ENCODE measurements at regions of chr9 and their contacts with region 1.

Region 1: DNA sequence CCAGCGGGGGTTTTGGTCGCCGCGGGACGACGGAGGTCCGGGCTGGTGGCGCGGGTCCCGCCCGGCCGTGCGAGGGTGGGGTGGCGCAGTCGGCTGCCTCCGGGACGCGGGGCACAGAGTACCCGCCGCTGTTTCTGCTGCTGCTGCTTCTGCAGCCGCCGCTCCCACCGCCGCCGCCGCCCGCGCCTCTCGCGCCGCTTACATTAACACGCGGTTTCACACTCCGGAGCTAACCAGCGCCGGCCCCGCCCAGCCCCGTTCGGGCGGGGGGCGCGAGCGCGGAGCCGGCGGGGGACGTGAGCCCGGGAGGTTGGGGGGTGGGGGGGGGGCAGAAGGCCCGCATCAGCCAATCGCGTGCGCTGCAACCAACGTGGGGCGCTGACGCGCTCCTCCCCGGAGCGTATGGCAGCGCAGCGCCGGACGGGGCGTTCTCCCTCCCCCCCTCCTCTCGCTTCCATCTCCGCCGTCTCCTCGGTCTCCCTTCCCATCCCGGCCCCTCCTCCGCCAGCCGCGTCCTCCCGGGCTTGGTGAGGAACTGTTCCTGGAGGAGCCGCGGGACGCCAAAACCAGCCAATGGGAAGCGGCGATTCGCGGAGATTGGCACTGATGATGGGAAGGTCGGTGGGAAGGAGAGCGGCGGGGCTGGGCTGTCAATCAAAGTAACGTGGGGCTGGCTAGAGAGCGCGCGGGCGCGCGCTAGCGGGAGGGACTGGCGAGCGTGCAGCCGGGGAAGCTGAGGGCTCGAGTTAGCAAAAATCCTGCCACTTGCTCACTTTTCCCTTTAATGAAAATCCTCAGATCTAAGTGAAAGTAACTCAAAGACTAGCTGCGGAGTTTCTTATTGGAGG is at the start of gene TLE1:
- DNase-seq: peak; percentile 100
- H3K4me3 ChIP-seq: peak within 1 kb of the TSS; percentile 64 to 66
- H3K27ac ChIP-seq: peak within 1 kb of the TSS; percentile 79 to 85
- H3K4me1 ChIP-seq: no peaks in the 10 kb centered on the region
- H3K27me3 ChIP-seq: no peaks in the 10 kb centered on the region
- CTCF ChIP-seq: peak in 1 of 4 experiments; percentile 15
- POLR2A ChIP-seq: peak; percentile 74
- total RNA-seq, gene TLE1: 61.0 to 89.5 TPM

Region 2: GRCh38 chr9:80605129-80605528 is 1084.4 kb before region 1 on chr9:
- intact Hi-C with region 1: loop called (anchors 2 kb)
- DNase-seq: no peak
- H3K4me3 ChIP-seq: no peak overlapping the region
- H3K27ac ChIP-seq: no peak overlapping the region
- H3K4me1 ChIP-seq: no peaks in the 10 kb centered on the region
- H3K27me3 ChIP-seq: no peaks in the 10 kb centered on the region
- CTCF ChIP-seq: peak in 3 of 4 experiments; percentile 25 to 34 (median 31)
- POLR2A ChIP-seq: no peak

Region 3: DNA sequence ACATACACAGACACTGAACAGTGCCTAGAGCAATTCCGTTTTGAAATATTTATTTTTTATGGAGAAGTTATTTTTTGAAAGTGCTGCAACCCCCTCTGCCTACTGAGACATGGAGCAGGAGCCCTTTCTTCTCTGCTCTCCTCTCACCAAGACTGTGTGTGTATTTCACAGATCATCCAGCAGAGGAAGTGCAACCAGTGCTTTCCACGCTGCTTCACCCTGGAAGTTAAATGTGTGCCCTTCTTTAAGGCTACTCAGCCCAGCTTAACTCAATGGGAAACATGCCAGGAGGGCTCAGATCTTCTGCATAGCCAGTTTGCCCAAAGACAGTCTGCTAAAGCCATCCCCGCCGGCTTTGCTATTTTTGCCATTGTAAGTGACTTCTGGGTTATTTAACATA is 606.5 kb before region 1 on chr9:
- intact Hi-C with region 1: loop called (anchors 10 kb)
- DNase-seq: no peak
- H3K4me3 ChIP-seq: no peak overlapping the region
- H3K27ac ChIP-seq: no peak overlapping the region
- H3K4me1 ChIP-seq: no peaks in the 10 kb centered on the region
- H3K27me3 ChIP-seq: no peaks in the 10 kb centered on the region
- CTCF ChIP-seq: no peak
- POLR2A ChIP-seq: no peak

Region 4: DNA sequence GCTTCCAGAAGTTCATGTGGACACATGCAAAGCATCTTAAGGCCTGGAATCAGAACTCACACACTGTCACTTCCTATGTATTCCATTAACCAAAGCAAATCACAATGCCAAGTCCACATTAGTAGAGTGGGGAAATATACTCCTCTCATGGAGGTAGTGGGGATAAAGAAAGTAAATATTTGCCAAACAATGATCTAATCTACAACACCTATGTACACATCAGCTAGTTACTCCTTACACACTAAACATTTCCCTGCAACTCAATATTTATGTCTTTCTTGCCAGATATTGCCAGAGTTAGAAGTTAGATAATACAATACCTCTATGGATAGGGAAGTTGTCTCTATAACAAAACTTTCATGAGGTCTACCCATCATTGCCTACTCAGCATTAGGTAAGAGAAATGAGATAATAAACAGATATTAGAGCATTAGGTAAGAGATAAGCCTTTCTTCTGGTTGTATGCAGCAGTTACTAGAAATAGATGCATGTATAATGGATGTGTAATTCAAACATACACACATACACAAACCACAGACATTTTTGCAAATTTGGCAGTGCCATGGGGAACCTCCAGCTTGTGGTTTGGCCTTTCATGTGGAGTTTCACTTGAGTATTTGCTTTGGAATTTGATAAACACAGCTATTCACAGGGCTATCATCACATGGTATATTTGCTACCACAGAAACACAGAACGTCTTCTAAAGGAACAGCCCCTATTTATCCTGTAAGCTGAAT is 196.7 kb before region 1 on chr9:
- intact Hi-C with region 1: loop called (anchors 10 kb)
- DNase-seq: no peak
- H3K4me3 ChIP-seq: no peak overlapping the region
- H3K27ac ChIP-seq: no peak overlapping the region
- H3K4me1 ChIP-seq: no peaks in the 10 kb centered on the region
- H3K27me3 ChIP-seq: no peaks in the 10 kb centered on the region
- CTCF ChIP-seq: no peak
- POLR2A ChIP-seq: no peak

Region 5: DNA sequence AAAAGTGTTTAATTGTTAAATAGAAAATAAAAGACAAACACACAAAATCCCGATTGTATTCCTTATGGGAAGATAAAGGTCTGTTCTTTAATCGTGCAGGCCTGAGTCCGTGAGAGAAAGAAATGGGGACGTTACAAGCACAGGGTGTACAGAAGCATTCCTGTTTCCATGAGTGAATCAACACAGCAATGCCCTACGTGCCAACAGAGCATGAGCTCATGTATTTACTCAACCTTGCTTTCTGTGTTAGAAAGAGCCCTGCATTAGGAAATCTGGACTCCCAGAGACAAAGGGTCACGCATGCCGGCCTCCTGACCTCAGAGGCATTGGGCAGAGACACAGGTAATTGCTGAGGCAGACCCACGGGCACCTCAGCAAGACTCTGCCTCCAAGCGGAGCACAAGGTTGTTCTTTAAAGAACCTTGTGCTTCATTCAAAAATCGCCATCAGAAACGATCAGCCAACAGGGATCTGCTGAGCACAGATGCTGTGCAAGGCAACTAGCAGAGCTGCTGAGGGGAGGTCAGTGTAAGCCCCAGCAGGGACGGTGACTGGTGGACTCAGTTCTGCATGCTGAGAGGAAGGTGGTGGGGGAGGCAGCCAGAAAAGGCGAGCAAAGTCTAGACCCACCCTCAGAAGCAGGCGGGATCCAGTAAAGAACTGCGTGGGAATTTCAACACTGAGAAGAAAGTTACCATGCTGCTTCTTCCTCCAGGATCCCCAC is 101.3 kb before region 1 on chr9:
- intact Hi-C with region 1: loop called (anchors 5 kb)
- DNase-seq: peak; percentile 84
- H3K4me3 ChIP-seq: no peak overlapping the region
- H3K27ac ChIP-seq: peak overlapping the region; percentile 46 to 64
- H3K4me1 ChIP-seq: no peaks in the 10 kb centered on the region
- H3K27me3 ChIP-seq: no peaks in the 10 kb centered on the region
- CTCF ChIP-seq: peak in 1 of 4 experiments; percentile 1
- POLR2A ChIP-seq: no peak

Region 6: DNA sequence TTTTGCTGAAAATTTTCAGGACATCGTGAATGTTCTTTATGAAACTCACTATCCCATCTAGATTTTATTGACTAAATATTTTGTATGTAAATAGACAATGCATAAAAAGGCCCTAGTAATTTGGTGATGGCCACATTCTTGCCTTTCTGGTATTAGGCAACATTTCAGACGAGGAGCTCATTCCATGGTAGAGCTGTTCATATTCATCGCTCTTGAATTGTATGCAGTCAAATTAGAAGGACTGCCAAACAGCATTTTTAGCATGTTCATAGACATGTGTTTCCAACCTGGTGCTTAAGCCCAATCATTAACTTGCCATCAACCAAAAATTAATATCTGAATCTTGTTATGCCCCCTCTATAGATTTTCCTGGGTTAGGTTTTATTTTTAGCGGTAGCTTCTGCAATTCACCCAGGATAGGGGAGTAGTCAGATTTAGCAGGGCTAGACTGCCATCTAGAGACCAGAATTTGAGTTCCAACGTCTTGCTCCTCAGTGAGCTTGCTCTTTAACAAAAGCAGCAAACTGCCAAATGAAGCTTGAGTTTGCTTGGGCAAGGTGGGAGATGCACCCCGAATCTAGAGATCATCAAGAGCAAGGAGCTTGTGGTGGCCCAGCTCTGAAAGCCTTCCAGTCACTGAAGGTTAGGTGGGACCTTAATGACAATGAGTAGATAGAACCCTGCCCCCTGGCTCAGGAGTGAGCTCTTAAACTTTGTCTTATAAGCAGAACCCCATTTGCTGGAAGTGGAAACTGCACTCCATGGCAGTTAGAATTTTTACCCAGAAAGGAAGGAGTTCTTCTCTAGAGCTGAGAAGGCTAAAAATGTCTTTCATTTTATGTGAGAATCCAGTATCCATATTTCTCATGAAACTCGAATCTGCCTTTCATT is 917.2 kb after region 1 on chr9:
- intact Hi-C with region 1: loop called (anchors 10 kb)
- DNase-seq: peak; percentile 32
- H3K4me3 ChIP-seq: no peak overlapping the region
- H3K27ac ChIP-seq: no peak overlapping the region
- H3K4me1 ChIP-seq: peaks cover 5% of the 10 kb centered on the region
- H3K27me3 ChIP-seq: no peaks in the 10 kb centered on the region
- CTCF ChIP-seq: peak in 3 of 4 experiments; percentile 46 to 61 (median 60)
- POLR2A ChIP-seq: no peak